CD4-positive, alpha-beta memory T cell (primary cell): ENCODE measurements at regions of chr17 and their contacts with region 1.

Region 1: DNA sequence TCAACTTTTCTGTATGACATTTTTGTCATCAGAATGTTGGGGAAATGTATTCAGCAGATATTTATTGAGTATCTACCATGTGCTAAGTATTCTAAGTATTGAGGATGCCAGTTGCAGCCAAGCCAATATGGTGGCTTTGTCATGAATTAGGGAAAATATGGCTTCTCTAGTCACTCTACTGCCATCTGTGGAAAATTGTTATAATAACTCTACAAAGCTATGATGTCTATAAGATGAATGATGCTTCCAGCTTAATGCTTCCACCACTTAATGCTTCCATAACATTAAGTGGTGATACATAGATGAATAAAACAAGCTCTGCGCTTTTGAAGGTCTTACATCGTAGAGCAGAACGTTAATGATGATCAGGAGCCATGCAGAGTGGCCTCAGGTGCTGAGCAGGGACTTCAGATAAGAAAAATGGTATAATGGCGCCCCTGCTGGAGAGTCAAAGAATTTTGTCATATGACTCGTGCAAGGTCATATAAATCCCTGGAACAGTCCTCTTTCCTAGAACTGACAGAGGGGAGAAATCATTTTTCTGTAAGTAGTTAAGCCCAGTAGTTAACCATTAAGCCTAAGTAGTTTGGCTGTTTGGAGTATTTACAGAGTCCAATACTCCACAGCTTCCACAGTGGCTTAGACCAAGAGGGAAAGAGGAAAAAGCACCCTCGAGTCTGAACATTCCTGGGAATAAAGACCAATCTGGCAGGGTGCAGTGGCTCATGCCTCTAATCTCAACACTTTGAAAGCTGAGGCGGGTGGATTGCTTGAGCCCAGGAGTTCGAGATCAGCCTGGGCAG is 2.7 kb upstream of the TMIGD1 start:
- DNase-seq: peak; percentile 56 to 79 (median 76)
- H3K4me3 ChIP-seq: no peak overlapping the region
- H3K4me3 Mint-ChIP-seq: peak overlapping the region in 2 of 8 donors; percentile 64 to 68
- H3K27ac ChIP-seq: no peak overlapping the region
- H3K27ac Mint-ChIP-seq: peak overlapping the region in 4 of 7 donors; percentile 5 to 80 (median 58)
- H3K4me1 ChIP-seq: peaks cover 24% of the 10 kb centered on the region
- H3K4me1 Mint-ChIP-seq: peaks cover 30 to 47% (median 38%) of the 10 kb centered on the region in 4 donors
- H3K27me3 ChIP-seq: no peaks in the 10 kb centered on the region
- H3K27me3 Mint-ChIP-seq: no peaks in the 10 kb centered on the region

Region 2: DNA sequence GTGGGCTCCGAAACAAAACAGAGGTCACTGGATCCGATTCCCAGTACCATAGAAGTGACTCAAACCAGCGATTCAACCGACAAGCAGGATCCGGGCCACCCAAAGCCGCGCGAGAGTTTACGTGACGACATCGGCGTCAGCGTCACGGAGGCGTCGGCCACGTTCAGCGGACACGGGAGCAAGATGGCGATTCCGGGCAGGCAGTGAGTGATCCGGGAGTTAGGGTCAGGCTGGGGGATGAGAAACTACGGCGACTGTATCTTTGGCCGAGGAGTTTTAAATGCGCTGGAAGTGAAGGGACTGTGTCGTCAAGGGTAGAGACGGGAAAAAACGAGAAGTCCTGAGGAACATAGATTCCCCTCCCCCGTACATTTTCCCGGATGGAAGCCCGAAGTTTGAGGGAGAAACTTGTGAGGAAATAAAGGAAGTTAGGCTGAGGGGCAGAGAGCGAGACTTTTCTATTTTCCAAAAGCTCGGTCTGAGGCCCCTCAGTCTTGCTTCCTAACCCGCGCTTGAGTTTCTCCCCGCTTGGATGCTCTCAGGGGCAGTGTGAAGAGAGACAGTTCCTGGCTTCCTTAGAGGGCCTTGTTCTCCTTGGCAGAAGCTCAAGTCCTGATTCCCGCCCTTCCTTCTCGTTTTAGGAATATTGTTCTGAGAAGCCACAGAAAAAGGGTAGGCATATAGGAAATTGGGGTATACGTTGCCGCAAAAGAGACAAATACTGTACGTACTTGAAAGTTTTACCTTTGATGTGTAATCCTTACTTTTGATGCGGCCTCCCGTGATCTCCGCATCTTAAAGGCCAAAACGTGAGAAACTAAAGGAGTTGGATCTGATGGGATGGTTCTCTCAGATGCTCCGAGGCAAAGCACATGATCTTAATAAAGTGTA is 219.7 kb before region 1 on chr17 and contains the start of gene NSRP1:
- CTCF ChIA-PET with region 1: interaction called, 15 read pairs
- POLR2A ChIA-PET with region 1: interaction called, 3 read pairs
- intact Hi-C with region 1: no loop called
- DNase-seq: peak; percentile 90 to 93 (median 90)
- H3K4me3 ChIP-seq: peak within 1 kb of the TSS; percentile 95 to 100
- H3K4me3 Mint-ChIP-seq: peak within 1 kb of the TSS; percentile 95 to 100 (median 98)
- H3K27ac ChIP-seq: peak within 1 kb of the TSS; percentile 94
- H3K27ac Mint-ChIP-seq: peak within 1 kb of the TSS; percentile 94 to 100 (median 99)
- H3K4me1 ChIP-seq: peaks cover 36% of the 10 kb centered on the region
- H3K4me1 Mint-ChIP-seq: peaks cover 28 to 54% (median 39%) of the 10 kb centered on the region in 4 donors
- H3K27me3 ChIP-seq: no peaks in the 10 kb centered on the region
- H3K27me3 Mint-ChIP-seq: peaks cover under 1% of the 10 kb centered on the region in 2 donors
- total RNA-seq, gene NSRP1: 31.5 to 32.2 TPM

Region 3: GRCh38 chr17:30267625-30268024 is 68.9 kb before region 1 on chr17:
- CTCF ChIA-PET with region 1: interaction called, 27 read pairs
- POLR2A ChIA-PET with region 1: no interaction called
- intact Hi-C with region 1: no loop called
- DNase-seq: no peak
- H3K4me3 ChIP-seq: no peak overlapping the region
- H3K4me3 Mint-ChIP-seq: no peak overlapping the region
- H3K27ac ChIP-seq: no peak overlapping the region
- H3K27ac Mint-ChIP-seq: peak overlapping the region in 2 of 7 donors; percentile 1 to 5
- H3K4me1 ChIP-seq: no peaks in the 10 kb centered on the region
- H3K4me1 Mint-ChIP-seq: peaks cover 0 to 3% (median under 1%) of the 10 kb centered on the region in 4 donors
- H3K27me3 ChIP-seq: no peaks in the 10 kb centered on the region
- H3K27me3 Mint-ChIP-seq: no peaks in the 10 kb centered on the region

Region 4: DNA sequence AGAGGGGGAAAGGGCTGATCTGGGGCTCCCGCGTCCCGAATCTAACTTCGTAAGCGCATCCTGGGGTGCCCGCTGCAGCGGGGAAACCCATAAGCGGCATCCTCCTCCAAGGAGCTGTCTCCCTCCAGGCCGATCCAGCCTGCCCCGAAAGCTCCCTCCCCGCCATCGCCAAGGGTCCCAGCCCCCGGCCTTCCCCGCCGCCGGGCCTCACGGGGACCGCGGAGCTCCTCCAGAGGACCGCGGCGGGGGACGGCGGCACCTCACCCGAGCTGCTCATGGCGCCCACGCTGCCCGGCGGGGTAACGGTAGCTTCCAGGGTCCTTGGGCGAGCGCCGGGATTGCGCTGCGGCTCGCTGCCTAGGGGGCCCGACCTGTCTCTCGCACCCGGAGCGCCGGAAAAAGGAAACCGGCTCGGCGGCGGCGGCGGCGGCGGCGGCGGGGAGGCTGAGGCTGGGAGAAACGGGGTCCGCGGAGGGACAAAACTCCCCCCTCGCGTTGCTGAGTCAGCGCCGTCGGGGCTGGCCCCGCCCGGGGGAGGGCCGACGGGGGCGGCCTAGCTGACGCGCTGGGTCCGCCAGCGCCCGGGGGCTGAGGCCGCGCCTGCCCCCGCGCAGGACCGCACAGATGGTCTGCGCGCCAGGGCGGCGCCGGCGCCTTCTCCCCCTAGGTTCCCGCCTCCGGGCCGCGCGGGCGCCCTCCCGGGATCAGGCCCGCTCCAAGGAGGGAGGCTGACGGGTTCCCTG is 44.9 kb before region 1 on chr17 and contains the start of gene BLMH:
- CTCF ChIA-PET with region 1: interaction called, 224 read pairs
- POLR2A ChIA-PET with region 1: interaction called, 83 read pairs
- intact Hi-C with region 1: loop called (anchors 1 kb)
- DNase-seq: peak; percentile 68 to 82 (median 76)
- H3K4me3 ChIP-seq: peak within 1 kb of the TSS; percentile 77 to 80
- H3K4me3 Mint-ChIP-seq: peak within 1 kb of the TSS; percentile 89 to 97 (median 96)
- H3K27ac ChIP-seq: peak within 1 kb of the TSS; percentile 68
- H3K27ac Mint-ChIP-seq: peak within 1 kb of the TSS; percentile 87 to 94 (median 92)
- H3K4me1 ChIP-seq: peaks cover 24% of the 10 kb centered on the region
- H3K4me1 Mint-ChIP-seq: peaks cover 17 to 20% (median 18%) of the 10 kb centered on the region in 4 donors
- H3K27me3 ChIP-seq: no peaks in the 10 kb centered on the region
- H3K27me3 Mint-ChIP-seq: no peaks in the 10 kb centered on the region
- total RNA-seq, gene BLMH: 54.0 to 57.6 TPM

Region 5: DNA sequence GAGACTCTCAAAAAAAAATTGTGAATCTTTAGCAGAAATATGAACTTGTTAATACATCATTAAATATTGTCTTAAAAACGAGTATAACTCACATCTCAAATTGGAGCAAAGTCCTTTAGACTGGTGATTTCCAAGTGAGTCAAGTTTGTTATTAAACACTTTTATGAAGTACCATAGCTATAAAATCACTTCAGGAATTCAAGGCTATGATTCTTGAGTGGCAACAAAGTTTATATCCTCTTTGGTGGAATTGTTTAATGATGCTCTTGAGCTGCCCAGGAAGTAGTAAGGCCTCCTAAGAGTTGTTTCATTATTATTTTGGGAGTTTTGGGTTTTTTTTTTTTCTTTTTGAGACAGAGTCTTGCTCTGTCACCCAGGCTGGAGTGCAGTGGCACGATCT is 28.2 kb before region 1 on chr17:
- CTCF ChIA-PET with region 1: interaction called, 224 read pairs
- POLR2A ChIA-PET with region 1: interaction called, 10 read pairs
- intact Hi-C with region 1: no loop called
- DNase-seq: no peak
- H3K4me3 ChIP-seq: no peak overlapping the region
- H3K4me3 Mint-ChIP-seq: no peak overlapping the region
- H3K27ac ChIP-seq: no peak overlapping the region
- H3K27ac Mint-ChIP-seq: no peak overlapping the region
- H3K4me1 ChIP-seq: no peaks in the 10 kb centered on the region
- H3K4me1 Mint-ChIP-seq: no peaks in the 10 kb centered on the region
- H3K27me3 ChIP-seq: no peaks in the 10 kb centered on the region
- H3K27me3 Mint-ChIP-seq: no peaks in the 10 kb centered on the region

Region 6: GRCh38 chr17:30323895-30324319 is 12.7 kb before region 1 on chr17:
- CTCF ChIA-PET with region 1: interaction called, 103 read pairs
- POLR2A ChIA-PET with region 1: interaction called, 136 read pairs
- intact Hi-C with region 1: loop called (anchors 1 kb)
- DNase-seq: peak; percentile 34 to 71 (median 48)
- H3K4me3 ChIP-seq: peak overlapping the region; percentile 9 to 14
- H3K4me3 Mint-ChIP-seq: peak overlapping the region; percentile 62 to 80 (median 70)
- H3K27ac ChIP-seq: peak overlapping the region; percentile 45
- H3K27ac Mint-ChIP-seq: peak overlapping the region; percentile 82 to 96 (median 93)
- H3K4me1 ChIP-seq: peaks cover 48% of the 10 kb centered on the region
- H3K4me1 Mint-ChIP-seq: peaks cover 36 to 54% (median 41%) of the 10 kb centered on the region in 4 donors
- H3K27me3 ChIP-seq: no peaks in the 10 kb centered on the region
- H3K27me3 Mint-ChIP-seq: no peaks in the 10 kb centered on the region